ENCODE measurements at regions of chr10 and their contacts with region 1.

Region 1: GRCh38 chr10:30591249-30591670 is 38.3 kb downstream of the LYZL2 start:
- DNase-seq: peak; percentile 56
- H3K27ac ChIP-seq: no peak overlapping the region
- CTCF ChIP-seq: peak; percentile 83

Region 2: DNA sequence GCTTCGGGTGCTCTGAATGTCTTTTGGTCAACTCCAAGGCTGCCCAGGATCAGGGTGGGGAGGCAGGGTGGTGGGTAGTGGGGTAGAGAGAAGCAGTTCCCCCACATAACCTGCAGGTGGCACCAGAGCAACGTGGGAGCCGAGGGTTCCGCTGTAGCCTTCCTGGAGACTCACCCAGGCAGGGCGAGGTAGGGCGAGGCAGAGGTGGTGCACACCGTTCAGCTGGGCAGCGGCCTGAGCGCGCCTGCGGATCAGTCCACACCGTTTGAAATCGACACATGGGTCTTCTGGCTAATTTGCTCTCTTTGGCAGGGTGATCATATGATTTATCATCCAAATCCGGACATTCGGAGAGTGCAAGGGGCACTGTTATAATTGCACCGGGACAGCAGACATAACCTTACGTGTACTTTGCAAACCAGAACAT is 198.7 kb before region 1 on chr10:
- CTCF ChIA-PET with region 1: interaction called, 22 read pairs
- POLR2A ChIA-PET with region 1: no interaction called
- DNase-seq: peak; percentile 82
- H3K27ac ChIP-seq: no peak overlapping the region
- CTCF ChIP-seq: peak; percentile 94

Region 3: DNA sequence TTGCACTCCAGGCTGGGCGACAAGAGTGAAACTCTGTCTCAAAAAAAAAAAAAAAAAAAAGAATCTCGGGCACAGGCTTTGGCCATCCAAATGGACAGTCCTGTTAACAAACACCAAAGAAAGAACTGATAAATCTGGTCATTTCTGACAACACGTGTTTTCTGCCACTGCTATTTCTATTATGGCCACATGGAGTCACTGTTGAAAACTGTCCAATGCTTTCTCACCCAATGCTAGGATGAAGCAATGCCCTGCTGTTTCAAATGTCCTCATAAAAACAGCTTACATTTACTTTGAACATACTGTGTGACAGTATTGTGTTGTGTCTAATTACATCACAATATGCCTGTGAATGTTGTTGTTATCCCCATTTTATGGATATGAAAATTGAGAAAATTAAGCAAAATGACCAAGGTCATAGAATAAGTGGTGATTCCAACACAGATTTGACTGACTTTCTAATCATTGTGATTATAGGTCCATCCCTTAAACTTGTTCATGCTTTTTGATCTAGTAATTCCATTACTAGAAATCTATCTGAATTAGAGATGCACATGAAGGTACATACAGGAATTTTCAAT is 177.2 kb before region 1 on chr10:
- CTCF ChIA-PET with region 1: interaction called, 10 read pairs
- POLR2A ChIA-PET with region 1: no interaction called
- DNase-seq: peak; percentile 69
- H3K27ac ChIP-seq: no peak overlapping the region
- CTCF ChIP-seq: peak; percentile 85

Measured in RWPE1 (cell line).